ENCODE measurements at regions of chr5 and their contacts with region 1.

Region 1: GRCh38 chr5:10424124-10424731 is 17.5 kb upstream of the ROPN1L start:
- DNase-seq: peak; percentile 33
- ATAC-seq: peak; percentile 37
- H3K4me3 Mint-ChIP-seq: no peak overlapping the region
- H3K27ac Mint-ChIP-seq: no peak overlapping the region
- H3K4me1 Mint-ChIP-seq: peaks cover 36% of the 10 kb centered on the region
- H3K27me3 Mint-ChIP-seq: no peaks in the 10 kb centered on the region

Region 2: DNA sequence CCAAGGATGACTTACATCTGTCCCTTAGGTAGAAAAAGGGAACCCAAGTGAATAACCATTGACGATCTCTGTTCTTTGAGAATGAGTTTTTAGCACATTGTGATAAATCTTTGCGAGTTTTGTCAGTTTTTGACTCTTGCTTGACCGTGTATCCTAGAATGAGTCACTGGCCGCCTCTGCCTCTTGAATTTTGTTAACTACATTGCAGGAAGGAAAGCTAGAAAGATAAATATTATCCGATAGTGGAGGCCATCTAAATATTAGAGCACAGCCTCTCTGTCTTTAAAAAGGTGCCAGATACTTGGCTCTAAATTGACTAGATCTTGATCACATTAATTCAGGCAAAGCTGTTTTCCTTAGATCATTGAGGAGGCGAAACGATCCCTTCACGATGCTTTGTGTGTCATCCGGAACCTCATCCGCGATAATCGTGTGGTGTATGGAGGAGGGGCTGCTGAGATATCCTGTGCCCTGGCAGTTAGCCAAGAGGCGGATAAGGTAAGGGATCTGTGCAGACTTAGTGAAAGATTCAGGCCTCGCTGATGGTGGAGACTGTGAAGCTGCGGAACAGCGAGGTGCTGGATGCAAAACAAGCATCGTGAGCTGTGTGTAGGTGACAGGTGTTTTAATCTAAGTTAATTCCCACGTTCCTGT is 162.0 kb before region 1 on chr5:
- CTCF ChIA-PET with region 1: no interaction called
- POLR2A ChIA-PET with region 1: interaction called, 7 read pairs
- intact Hi-C with region 1: loop called in 1 of 2 experiments (anchors 5 kb)
- DNase-seq: no peak
- ATAC-seq: no peak
- H3K4me3 Mint-ChIP-seq: no peak overlapping the region
- H3K27ac Mint-ChIP-seq: peak overlapping the region; percentile 29
- H3K4me1 Mint-ChIP-seq: peaks cover 14% of the 10 kb centered on the region
- H3K27me3 Mint-ChIP-seq: no peaks in the 10 kb centered on the region

Region 3: DNA sequence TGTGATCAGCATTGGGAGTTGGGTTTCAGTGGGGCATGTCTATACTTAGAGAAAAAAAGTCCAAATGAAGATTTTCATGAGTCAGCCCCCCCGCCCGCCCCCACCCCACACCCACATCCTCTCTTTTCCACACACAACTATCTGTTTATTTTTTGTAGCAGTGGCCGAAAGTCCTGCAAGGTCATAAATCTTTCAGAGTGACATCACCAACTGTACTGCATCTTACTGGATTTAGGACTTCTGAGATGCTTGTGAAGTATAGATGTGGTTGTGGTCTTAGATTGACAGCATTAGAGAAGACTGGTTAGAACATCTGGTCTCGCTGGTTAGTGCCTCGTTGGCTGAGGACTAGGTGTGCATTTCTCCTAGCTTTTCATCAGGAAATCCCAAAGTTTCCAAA is 10.2 kb after region 1 on chr5:
- CTCF ChIA-PET with region 1: interaction called, 17 read pairs
- POLR2A ChIA-PET with region 1: no interaction called
- intact Hi-C with region 1: no loop called
- DNase-seq: no peak
- ATAC-seq: peak; percentile 6
- H3K4me3 Mint-ChIP-seq: no peak overlapping the region
- H3K27ac Mint-ChIP-seq: no peak overlapping the region
- H3K4me1 Mint-ChIP-seq: peaks cover 5% of the 10 kb centered on the region
- H3K27me3 Mint-ChIP-seq: no peaks in the 10 kb centered on the region

Region 4: GRCh38 chr5:10441083-10441991 is 17.1 kb after region 1 on chr5 and contains the start of gene ROPN1L:
- CTCF ChIA-PET with region 1: interaction called, 17 read pairs
- POLR2A ChIA-PET with region 1: no interaction called
- intact Hi-C with region 1: loop called in 1 of 2 experiments (anchors 2 kb)
- DNase-seq: peak; percentile 87
- ATAC-seq: peak; percentile 98
- H3K4me3 Mint-ChIP-seq: peak within 1 kb of the TSS; percentile 72
- H3K27ac Mint-ChIP-seq: no peak within 1 kb of the TSS
- H3K4me1 Mint-ChIP-seq: peaks cover 31% of the 10 kb centered on the region
- H3K27me3 Mint-ChIP-seq: peaks cover 3% of the 10 kb centered on the region
- total RNA-seq, gene ROPN1L: 0.28 TPM in 1 of 2 experiments, not detected in the other

Measured in activated CD4-positive, alpha-beta T cell treated with anti-CD3 and anti-CD28 coated beads for 36 hours (primary cell).